ENCODE measurements at regions of chr7 and their contacts with region 1.

Region 1: DNA sequence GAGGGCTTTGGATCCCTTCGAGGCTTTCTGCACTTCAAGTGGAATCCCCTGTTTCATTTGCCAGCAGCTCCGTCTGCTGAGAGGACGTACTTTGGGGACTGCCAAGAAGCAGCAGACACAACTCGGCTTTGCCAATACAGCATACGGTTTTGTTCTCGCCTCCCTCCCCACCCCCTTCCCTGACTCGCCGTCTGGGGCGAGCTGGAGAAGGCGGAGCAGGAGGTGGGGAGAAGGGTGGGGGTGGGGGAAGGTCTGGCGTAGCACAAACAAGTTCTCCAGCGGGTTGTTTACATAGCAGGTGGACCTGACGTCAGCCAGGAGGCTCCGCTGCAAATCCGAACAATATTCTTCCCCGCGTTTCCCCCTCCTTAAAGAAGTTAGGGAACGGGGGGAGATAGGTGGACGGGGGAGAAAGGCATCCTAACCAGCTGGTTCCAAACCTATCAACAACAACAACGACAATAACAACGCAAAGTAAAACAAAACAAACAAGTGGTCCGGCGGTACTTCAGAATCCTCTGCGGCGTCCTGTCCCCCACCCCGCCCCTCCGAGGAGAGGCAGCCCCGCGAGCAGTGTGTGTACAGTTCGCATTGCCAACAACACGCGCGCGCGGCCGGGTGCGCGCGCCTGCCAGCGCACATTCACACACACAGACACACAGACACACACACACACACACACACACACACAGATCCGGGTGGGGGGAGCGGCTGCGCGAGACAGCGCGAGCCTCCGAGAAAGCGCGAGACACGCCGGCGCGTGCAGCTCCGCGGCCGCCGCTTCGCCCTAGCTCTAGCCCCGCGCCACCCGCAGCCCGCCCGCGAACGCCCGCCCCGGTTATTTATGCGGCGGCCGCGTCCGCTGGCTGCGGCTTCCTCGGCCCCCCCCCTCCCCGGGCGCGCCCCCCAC is 167.0 kb upstream of the PPP1R3A start:
- DNase-seq: no peak
- ATAC-seq: peak; percentile 51
- H3K4me3 ChIP-seq: peak overlapping the region; percentile 34 to 54 (median 38); a peak in 5 of 6 replicates
- H3K27ac ChIP-seq: no peak overlapping the region
- H3K4me1 ChIP-seq: peaks cover 43% of the 10 kb centered on the region
- H3K27me3 ChIP-seq: peaks cover 1 to 28% of the 10 kb centered on the region in 2 experiments
- CTCF ChIP-seq: no peak
- EP300 ChIP-seq: no peak
- POLR2A ChIP-seq: no peak
- RAD21 ChIP-seq: no peak

Region 2: GRCh38 chr7:114048386-114049240 is 37.2 kb before region 1 on chr7:
- CTCF ChIA-PET with region 1: no interaction called
- POLR2A ChIA-PET with region 1: no interaction called
- in situ Hi-C with region 1: no loop called
- intact Hi-C with region 1: no loop called
- DNase-seq: peak; percentile 12
- ATAC-seq: peak; percentile 87
- H3K4me3 ChIP-seq: peak overlapping the region; percentile 43 to 66 (median 50)
- H3K27ac ChIP-seq: no peak overlapping the region
- H3K4me1 ChIP-seq: peaks cover 9% of the 10 kb centered on the region
- H3K27me3 ChIP-seq: no peaks in the 10 kb centered on the region; a peak in 1 of 5 replicates
- CTCF ChIP-seq: no peak
- EP300 ChIP-seq: no peak
- POLR2A ChIP-seq: no peak
- RAD21 ChIP-seq: no peak

Region 3: GRCh38 chr7:114209968-114210367 is 124.1 kb after region 1 on chr7:
- CTCF ChIA-PET with region 1: no interaction called
- POLR2A ChIA-PET with region 1: no interaction called
- in situ Hi-C with region 1: no loop called
- intact Hi-C with region 1: loop called (anchors 2 kb)
- DNase-seq: no peak
- ATAC-seq: 0 out of 3 replicates have a peak, but pooled peaks have one; percentile 49
- H3K4me3 ChIP-seq: no peak overlapping the region
- H3K27ac ChIP-seq: no peak overlapping the region
- H3K4me1 ChIP-seq: no peaks in the 10 kb centered on the region
- H3K27me3 ChIP-seq: no peaks in the 10 kb centered on the region
- CTCF ChIP-seq: 0 out of 2 replicates have a peak, but pooled peaks have one; percentile 16
- EP300 ChIP-seq: no peak
- POLR2A ChIP-seq: no peak
- RAD21 ChIP-seq: no peak

Region 4: DNA sequence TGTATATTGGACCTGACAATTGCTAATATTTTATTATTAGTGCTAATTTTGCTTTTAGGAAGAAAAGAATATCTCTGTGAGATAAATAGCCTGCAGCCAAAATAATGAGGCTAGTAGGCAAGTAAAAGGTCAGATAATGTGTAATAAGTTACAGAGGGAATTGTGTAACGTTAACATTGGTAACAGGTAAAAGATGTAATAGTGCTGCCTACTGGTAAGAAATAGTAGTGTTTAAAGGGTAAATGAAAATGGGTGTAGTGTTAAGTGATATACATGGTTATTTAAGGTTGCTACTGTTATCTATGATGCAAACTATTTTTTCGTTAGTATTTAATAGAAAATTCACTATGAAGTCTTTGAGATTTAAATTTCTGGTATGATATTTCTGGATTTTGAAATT is 319.6 kb after region 1 on chr7:
- CTCF ChIA-PET with region 1: interaction called, 4 read pairs
- POLR2A ChIA-PET with region 1: no interaction called
- in situ Hi-C with region 1: loop called (anchors 25 kb)
- intact Hi-C with region 1: loop called (anchors 1 kb)
- DNase-seq: peak; percentile 30
- ATAC-seq: peak; percentile 86
- H3K4me3 ChIP-seq: no peak overlapping the region
- H3K27ac ChIP-seq: no peak overlapping the region
- H3K4me1 ChIP-seq: no peaks in the 10 kb centered on the region
- H3K27me3 ChIP-seq: no peaks in the 10 kb centered on the region
- CTCF ChIP-seq: peak; percentile 53
- EP300 ChIP-seq: no peak
- POLR2A ChIP-seq: no peak
- RAD21 ChIP-seq: no peak

Region 5: DNA sequence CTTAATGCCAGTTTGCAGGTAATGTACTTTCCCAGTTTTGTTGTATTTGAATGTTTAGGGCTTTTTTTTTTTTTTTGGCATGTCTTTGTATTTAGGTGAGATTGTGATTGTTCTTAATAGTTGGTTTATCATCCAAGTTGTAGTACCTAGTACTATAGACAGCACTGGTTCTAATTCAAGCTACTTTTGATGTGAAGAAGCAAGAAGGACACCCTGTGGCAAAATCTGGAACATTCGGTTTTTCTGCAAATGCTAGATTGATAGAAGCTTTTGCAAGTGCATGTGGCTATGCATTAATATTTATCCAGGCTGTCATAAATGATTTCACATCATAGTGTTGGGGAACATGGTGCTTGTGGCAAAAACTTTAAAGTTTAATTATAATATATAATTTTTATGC is 577.7 kb after region 1 on chr7:
- CTCF ChIA-PET with region 1: no interaction called
- POLR2A ChIA-PET with region 1: no interaction called
- in situ Hi-C with region 1: no loop called
- intact Hi-C with region 1: loop called (anchors 1 kb)
- DNase-seq: peak; percentile 3
- ATAC-seq: no peak
- H3K4me3 ChIP-seq: no peak overlapping the region
- H3K27ac ChIP-seq: no peak overlapping the region
- H3K4me1 ChIP-seq: peaks cover 8% of the 10 kb centered on the region; the same call in 1 of the 2 replicates
- H3K27me3 ChIP-seq: no peaks in the 10 kb centered on the region
- CTCF ChIP-seq: peak; percentile 27; the same call in 1 of the 2 replicates
- EP300 ChIP-seq: no peak
- POLR2A ChIP-seq: no peak
- RAD21 ChIP-seq: no peak

Region 6: GRCh38 chr7:115748131-115748738 is 1662.4 kb after region 1 on chr7:
- CTCF ChIA-PET with region 1: no interaction called
- POLR2A ChIA-PET with region 1: no interaction called
- in situ Hi-C with region 1: no loop called
- intact Hi-C with region 1: loop called (anchors 1 kb)
- DNase-seq: peak; percentile 41
- ATAC-seq: peak; percentile 92
- H3K4me3 ChIP-seq: no peak overlapping the region
- H3K27ac ChIP-seq: no peak overlapping the region
- H3K4me1 ChIP-seq: no peaks in the 10 kb centered on the region
- H3K27me3 ChIP-seq: no peaks in the 10 kb centered on the region
- CTCF ChIP-seq: peak; percentile 63
- EP300 ChIP-seq: no peak
- POLR2A ChIP-seq: no peak
- RAD21 ChIP-seq: no peak

Region 7: GRCh38 chr7:115851291-115851690 is 1765.4 kb after region 1 on chr7:
- CTCF ChIA-PET with region 1: interaction called, 3 read pairs
- POLR2A ChIA-PET with region 1: no interaction called
- in situ Hi-C with region 1: no loop called
- intact Hi-C with region 1: loop called (anchors 2 kb)
- DNase-seq: peak; percentile 24
- ATAC-seq: no peak
- H3K4me3 ChIP-seq: no peak overlapping the region
- H3K27ac ChIP-seq: no peak overlapping the region
- H3K4me1 ChIP-seq: no peaks in the 10 kb centered on the region
- H3K27me3 ChIP-seq: no peaks in the 10 kb centered on the region; a peak in 1 of 5 replicates
- CTCF ChIP-seq: peak; percentile 26; the same call in 1 of the 2 replicates
- EP300 ChIP-seq: no peak
- POLR2A ChIP-seq: no peak
- RAD21 ChIP-seq: no peak

Region 8: DNA sequence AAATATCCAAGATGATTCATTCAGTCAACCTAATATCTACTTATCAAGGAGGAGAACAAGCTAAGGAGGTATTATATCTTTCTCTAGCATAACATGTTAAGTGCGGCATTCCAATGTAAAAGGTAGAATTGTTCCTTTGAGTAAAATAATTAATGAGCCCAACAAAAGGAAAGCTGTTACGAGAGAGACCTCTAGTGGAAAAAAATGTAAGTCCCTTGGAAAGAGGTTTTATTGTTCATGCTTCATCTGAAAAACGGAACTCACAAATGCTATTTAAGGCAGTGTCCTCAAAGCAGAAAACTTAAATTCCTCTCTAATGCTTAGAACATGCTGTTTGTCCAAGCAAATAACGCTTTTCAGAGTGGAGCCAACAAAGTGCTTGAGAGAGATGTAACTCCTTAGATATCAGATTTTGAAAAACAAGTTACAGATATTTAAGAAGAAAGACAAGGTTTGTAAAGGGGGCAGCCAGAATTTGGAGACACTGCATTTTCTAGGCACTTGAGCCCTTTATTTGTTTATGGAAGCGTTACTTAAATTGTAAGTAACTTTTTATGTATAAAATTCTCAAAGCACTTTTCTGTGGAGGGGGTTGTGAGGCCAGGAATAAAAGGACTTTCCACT is 1824.8 kb after region 1 on chr7:
- CTCF ChIA-PET with region 1: no interaction called
- POLR2A ChIA-PET with region 1: no interaction called
- in situ Hi-C with region 1: no loop called
- intact Hi-C with region 1: loop called (anchors 1 kb)
- DNase-seq: peak; percentile 14
- ATAC-seq: no peak
- H3K4me3 ChIP-seq: no peak overlapping the region
- H3K27ac ChIP-seq: no peak overlapping the region
- H3K4me1 ChIP-seq: no peaks in the 10 kb centered on the region
- H3K27me3 ChIP-seq: no peaks in the 10 kb centered on the region
- CTCF ChIP-seq: peak; percentile 59
- EP300 ChIP-seq: no peak
- POLR2A ChIP-seq: no peak
- RAD21 ChIP-seq: no peak

Measured in HepG2 (cell line).